HEK293 (cell line): ENCODE measurements at regions of chr12 and their contacts with region 1.

Region 1: GRCh38 chr12:92145731-92146496 is at the start of gene BTG1:
- H3K4me3 ChIP-seq: peak within 1 kb of the TSS; percentile 99
- H3K27ac ChIP-seq: peak within 1 kb of the TSS; percentile 98
- H3K4me1 ChIP-seq: no peaks in the 10 kb centered on the region; the same call in 1 of the 2 replicates
- CTCF ChIP-seq: peak; percentile 58; the same call in 1 of the 2 replicates

Region 2: GRCh38 chr12:91637789-91638624 is 507.9 kb before region 1 on chr12:
- CTCF ChIA-PET with region 1: no interaction called
- POLR2A ChIA-PET with region 1: no interaction called
- H3K4me3 ChIP-seq: no peak overlapping the region
- H3K27ac ChIP-seq: no peak overlapping the region
- H3K4me1 ChIP-seq: no peaks in the 10 kb centered on the region
- CTCF ChIP-seq: no peak

Region 3: GRCh38 chr12:91778938-91779400 is 366.9 kb before region 1 on chr12:
- CTCF ChIA-PET with region 1: no interaction called
- POLR2A ChIA-PET with region 1: interaction called, 11 read pairs
- H3K4me3 ChIP-seq: no peak overlapping the region; the same call in 1 of the 2 replicates
- H3K27ac ChIP-seq: no peak overlapping the region
- H3K4me1 ChIP-seq: no peaks in the 10 kb centered on the region
- CTCF ChIP-seq: no peak

Region 4: GRCh38 chr12:91811481-91812287 is 334.2 kb before region 1 on chr12:
- CTCF ChIA-PET with region 1: interaction called, 18 read pairs
- POLR2A ChIA-PET with region 1: interaction called, 5 read pairs
- H3K4me3 ChIP-seq: no peak overlapping the region
- H3K27ac ChIP-seq: no peak overlapping the region
- H3K4me1 ChIP-seq: no peaks in the 10 kb centered on the region
- CTCF ChIP-seq: peak; percentile 64

Region 5: GRCh38 chr12:92075425-92075914 is 70.4 kb before region 1 on chr12:
- CTCF ChIA-PET with region 1: no interaction called
- POLR2A ChIA-PET with region 1: interaction called, 13 read pairs
- H3K4me3 ChIP-seq: no peak overlapping the region
- H3K27ac ChIP-seq: no peak overlapping the region
- H3K4me1 ChIP-seq: no peaks in the 10 kb centered on the region
- CTCF ChIP-seq: no peak

Region 6: DNA sequence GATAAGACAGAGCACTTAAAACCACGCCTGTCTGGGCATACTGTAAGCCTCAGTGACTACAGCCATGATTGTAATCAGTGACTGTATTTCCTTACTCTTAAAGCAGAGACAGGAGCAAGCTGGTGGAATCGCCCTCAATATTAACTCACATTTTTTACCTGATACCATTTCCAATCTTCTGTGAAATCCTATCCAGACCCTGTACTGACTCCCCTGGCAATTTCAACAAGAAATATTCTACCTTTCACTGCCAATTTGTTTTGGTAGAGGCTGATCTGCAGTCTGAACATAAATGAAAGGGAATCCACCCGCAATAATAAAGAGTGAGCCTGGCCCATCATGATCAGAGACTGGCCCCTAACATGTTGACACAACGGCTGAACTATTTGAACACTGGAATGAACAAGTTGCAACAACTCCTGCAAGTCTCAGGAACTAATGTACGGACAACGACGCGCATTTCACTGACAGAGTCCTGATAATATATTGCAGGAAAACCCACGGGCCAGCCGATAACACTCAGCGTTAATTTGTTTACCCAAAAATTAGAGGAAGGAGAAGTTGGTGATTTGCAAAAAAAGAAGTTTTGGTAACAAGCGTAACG is 195.3 kb after region 1 on chr12:
- CTCF ChIA-PET with region 1: no interaction called
- POLR2A ChIA-PET with region 1: no interaction called
- H3K4me3 ChIP-seq: no peak overlapping the region
- H3K27ac ChIP-seq: no peak overlapping the region
- H3K4me1 ChIP-seq: no peaks in the 10 kb centered on the region
- CTCF ChIP-seq: no peak

Region 7: GRCh38 chr12:92408072-92408900 is 262.4 kb after region 1 on chr12:
- CTCF ChIA-PET with region 1: interaction called, 11 read pairs
- POLR2A ChIA-PET with region 1: interaction called, 4 read pairs
- H3K4me3 ChIP-seq: no peak overlapping the region
- H3K27ac ChIP-seq: no peak overlapping the region
- H3K4me1 ChIP-seq: no peaks in the 10 kb centered on the region
- CTCF ChIP-seq: no peak